K562 (cell line): ENCODE measurements at regions of chr2 and their contacts with region 1.

Region 1: DNA sequence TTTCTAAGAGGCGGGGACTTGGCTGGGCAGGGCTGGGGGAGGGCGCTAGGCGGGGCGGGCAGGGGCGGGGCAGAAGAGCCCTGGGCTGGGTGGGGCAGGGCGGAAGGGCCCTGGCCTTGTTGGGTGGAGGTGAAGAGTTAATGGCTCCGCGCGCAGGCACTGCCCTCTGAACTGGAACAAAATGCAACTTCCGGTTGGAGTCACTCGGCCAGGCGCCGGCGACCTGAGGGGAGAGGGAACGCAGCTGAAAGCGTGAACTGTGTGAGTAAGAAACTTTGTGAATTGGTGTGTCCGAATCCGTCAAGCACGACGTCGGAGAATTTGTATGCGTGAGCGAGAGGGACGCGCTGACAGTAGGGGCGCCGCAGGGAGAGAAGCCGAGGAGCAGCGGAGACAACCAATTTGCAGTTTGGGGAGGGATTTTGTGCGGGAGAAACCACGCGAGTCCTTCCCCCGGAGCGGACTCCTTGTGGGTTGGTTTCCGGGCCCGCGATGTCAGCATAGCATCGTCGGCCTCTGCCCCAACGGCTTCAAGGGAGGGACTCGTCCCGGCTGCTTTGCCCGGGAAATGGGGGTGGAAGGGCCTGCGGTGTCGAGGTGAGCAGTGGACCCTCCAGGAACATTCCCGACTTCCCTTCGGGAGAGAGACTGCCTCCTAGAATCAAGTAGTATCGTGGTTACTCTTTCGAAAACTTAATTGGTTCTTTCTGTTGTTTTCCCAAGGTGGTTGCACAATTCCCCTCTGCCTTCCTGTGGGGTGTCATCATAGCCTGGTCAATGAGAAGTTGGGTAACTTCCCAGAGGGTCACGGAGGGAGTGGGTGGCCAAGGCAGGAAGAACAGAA is at the start of gene TANK:
- DNase-seq: peak; percentile 98 to 99 (median 98)
- ATAC-seq: peak; percentile 95
- H3K4me3 ChIP-seq: peak within 1 kb of the TSS; percentile 68
- H3K27ac ChIP-seq: peak within 1 kb of the TSS; percentile 93
- H3K4me1 ChIP-seq: peaks cover 0 to 7% of the 10 kb centered on the region in 2 experiments; a peak in 2 of 5 replicates
- H3K27me3 ChIP-seq: no peaks in the 10 kb centered on the region
- CTCF ChIP-seq: no peak
- EP300 ChIP-seq: no peak
- POLR2A ChIP-seq: peak; percentile 99
- RAD21 ChIP-seq: no peak
- polyA plus RNA-seq, gene TANK: 83.7 to 91.5 TPM

Region 2: DNA sequence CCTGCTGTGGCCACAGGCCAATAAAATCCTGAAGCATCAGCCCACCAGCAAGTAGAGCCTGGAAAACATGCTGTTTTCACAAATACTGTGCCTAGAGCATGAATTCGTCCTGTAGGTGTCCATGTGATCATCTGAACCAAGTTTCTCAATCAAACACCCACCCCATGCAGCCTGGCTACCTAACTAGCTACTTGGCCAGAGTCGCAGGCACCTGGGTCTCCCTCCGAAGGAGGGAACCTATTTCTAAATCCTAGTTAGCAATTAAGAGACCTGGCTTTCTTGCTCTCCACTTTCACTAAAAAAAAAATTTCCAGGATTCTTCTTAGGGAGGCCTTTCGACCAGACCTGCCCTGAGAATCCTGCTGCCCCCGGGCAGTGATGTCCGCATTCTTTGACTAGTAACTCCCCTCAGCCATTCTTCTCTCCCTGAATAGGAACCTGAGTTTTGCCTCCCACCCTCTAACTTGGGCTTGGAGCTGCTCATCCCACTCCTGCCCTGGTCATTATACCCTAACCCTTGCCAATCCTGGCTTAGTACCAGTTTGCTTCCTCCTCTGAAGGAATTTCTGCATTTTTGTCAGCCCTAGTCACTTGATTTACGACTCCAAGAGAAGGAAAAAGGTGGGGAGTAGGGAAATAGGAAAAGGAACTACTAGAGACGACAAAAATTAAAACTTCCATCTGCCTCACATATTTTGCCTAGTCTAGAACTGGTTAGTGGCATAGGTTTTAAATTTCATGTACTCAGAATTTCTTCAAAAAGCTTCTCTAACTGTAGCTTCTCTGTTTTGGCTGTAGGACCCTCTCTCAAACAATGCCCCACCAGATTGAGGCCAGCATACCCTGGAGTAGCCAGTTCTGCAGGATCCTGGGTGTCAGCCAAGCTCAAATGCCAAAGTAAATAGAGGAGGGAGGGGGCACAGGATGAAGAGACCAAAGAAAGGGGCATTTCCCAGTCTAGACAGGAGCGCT is 25.6 kb before region 1 on chr2:
- CTCF ChIA-PET with region 1: no interaction called
- POLR2A ChIA-PET with region 1: no interaction called
- in situ Hi-C with region 1: no loop called
- intact Hi-C with region 1: no loop called
- DNase-seq: no peak
- ATAC-seq: peak; percentile 37; the same call in 2 of the 3 replicates
- H3K4me3 ChIP-seq: no peak overlapping the region
- H3K27ac ChIP-seq: no peak overlapping the region
- H3K4me1 ChIP-seq: no peaks in the 10 kb centered on the region
- H3K27me3 ChIP-seq: no peaks in the 10 kb centered on the region
- CTCF ChIP-seq: no peak
- EP300 ChIP-seq: no peak
- POLR2A ChIP-seq: no peak
- RAD21 ChIP-seq: no peak

Region 3: GRCh38 chr2:161172901-161173540 is 12.6 kb after region 1 on chr2:
- CTCF ChIA-PET with region 1: no interaction called
- POLR2A ChIA-PET with region 1: interaction called, 3 read pairs
- in situ Hi-C with region 1: no loop called
- intact Hi-C with region 1: loop called (anchors 1 kb)
- DNase-seq: peak; percentile 75 to 92 (median 84)
- ATAC-seq: peak; percentile 91
- H3K4me3 ChIP-seq: no peak overlapping the region
- H3K27ac ChIP-seq: peak overlapping the region; percentile 90
- H3K4me1 ChIP-seq: peaks cover 0 to 37% of the 10 kb centered on the region in 2 experiments; a peak in 4 of 5 replicates
- H3K27me3 ChIP-seq: no peaks in the 10 kb centered on the region
- CTCF ChIP-seq: no peak
- EP300 ChIP-seq: peak; percentile 97
- POLR2A ChIP-seq: no peak; the same call in 1 of the 2 replicates
- RAD21 ChIP-seq: no peak